ENCODE measurements at regions of chr1 and their contacts with region 1.

Region 1: GRCh38 chr1:239976130-239976968 is 115.3 kb upstream of the FMN2 start:
- DNase-seq: peak in 1 of 5 donors; percentile 37
- ATAC-seq: no peak
- H3K4me3 ChIP-seq: no peak overlapping the region
- H3K27ac ChIP-seq: no peak overlapping the region
- H3K4me1 ChIP-seq: no peaks in the 10 kb centered on the region
- H3K27me3 ChIP-seq: peaks cover 0 to 8% (median 0%) of the 10 kb centered on the region in 9 donors
- CTCF ChIP-seq: peak; percentile 78 to 97 (median 91)
- POLR2A ChIP-seq: no peak

Region 2: DNA sequence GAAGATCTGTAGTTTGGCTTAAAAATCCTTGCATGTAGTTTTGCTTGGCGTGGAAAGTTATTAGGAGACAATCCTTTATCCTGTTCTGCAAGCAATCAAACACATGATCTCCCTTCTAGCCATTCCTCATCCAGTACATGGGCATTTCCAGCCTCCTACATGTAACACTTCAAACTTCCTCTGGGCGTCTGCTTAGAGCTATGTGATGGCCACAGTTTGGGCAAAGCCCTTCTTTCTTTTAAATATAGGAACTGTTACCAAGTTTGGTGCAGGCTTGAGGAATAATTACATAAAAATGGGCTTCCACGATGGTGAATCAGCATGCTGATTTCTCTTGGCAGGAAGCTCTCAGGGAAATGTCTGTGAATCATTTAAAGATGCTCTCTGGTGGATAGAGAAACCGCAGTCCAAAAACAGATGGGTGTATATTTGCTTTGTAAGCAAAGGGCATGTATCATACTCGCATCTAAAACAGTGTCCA is 61.6 kb before region 1 on chr1:
- intact Hi-C with region 1: no loop called
- DNase-seq: no peak
- ATAC-seq: no peak
- H3K4me3 ChIP-seq: no peak overlapping the region
- H3K27ac ChIP-seq: peak overlapping the region in 1 of 12 donors; percentile 4
- H3K4me1 ChIP-seq: peaks cover 0 to 3% (median 0%) of the 10 kb centered on the region in 12 donors
- H3K27me3 ChIP-seq: peaks cover 0 to 8% (median 0%) of the 10 kb centered on the region in 9 donors
- CTCF ChIP-seq: no peak
- POLR2A ChIP-seq: no peak

Region 3: GRCh38 chr1:239951511-239952140 is 24.7 kb before region 1 on chr1:
- intact Hi-C with region 1: loop called in 1 of 10 experiments (anchors 2 kb)
- DNase-seq: peak in 3 of 5 donors; percentile 30 to 51 (median 39)
- ATAC-seq: peak in 1 of 4 donors; percentile 59
- H3K4me3 ChIP-seq: no peak overlapping the region
- H3K27ac ChIP-seq: no peak overlapping the region
- H3K4me1 ChIP-seq: no peaks in the 10 kb centered on the region
- H3K27me3 ChIP-seq: peaks cover 0 to 17% (median 0%) of the 10 kb centered on the region in 9 donors
- CTCF ChIP-seq: peak; percentile 57 to 87 (median 74)
- POLR2A ChIP-seq: no peak